ENCODE measurements at regions of chr7 and their contacts with region 1.

Region 1: DNA sequence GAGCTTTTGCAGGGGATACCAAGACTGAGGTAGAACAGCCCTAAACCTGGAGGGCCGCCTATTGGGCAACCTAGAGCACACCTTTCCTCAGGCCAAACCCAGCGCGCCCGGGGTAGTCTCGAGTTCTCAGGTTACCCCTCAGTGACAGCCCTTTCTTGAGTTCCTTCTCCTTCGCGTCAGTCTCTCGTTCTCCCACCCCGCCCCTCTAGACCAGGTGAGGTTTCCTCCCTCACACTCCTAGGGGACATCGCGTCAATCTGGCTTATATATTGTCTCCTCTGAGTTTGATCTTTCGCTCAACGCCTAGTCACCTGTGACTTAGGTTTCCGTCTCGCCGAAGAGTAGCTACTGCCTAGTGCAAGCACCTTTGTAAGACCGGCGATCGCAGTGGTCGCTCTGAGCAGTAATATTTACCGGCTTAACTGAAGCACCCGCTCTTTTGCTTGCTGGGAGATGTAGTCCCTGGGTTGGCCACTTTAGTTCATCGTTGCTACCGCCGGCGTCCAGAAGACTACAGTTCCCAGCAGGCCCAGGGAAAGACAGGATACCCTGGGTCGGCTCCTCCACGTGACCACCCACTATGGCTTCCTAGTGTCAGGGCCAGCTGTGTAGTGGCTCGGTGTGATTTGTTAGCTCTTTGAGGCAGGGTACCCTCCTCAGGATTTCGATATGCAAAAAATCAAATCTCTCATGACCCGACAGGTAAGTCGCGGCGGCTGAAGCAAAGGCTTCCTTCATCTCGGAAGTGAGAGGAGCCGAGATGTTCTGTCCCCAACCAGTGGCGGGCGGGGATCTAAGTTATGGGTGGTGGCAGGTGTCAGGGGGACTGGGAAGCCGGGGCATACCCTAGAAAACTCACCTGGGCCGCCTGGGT is at the start of gene VPS50:
- DNase-seq: peak; percentile 96
- ATAC-seq: peak; percentile 96
- H3K4me3 ChIP-seq: peak within 1 kb of the TSS; percentile 86
- H3K27ac ChIP-seq: peak within 1 kb of the TSS; percentile 78
- H3K4me1 ChIP-seq: peaks cover 22% of the 10 kb centered on the region
- H3K27me3 ChIP-seq: no peaks in the 10 kb centered on the region
- CTCF ChIP-seq: peak; percentile 34; the same call in 1 of the 2 replicates
- total RNA-seq, gene VPS50: 10.5 and 16.7 TPM in 2 replicates

Region 2: DNA sequence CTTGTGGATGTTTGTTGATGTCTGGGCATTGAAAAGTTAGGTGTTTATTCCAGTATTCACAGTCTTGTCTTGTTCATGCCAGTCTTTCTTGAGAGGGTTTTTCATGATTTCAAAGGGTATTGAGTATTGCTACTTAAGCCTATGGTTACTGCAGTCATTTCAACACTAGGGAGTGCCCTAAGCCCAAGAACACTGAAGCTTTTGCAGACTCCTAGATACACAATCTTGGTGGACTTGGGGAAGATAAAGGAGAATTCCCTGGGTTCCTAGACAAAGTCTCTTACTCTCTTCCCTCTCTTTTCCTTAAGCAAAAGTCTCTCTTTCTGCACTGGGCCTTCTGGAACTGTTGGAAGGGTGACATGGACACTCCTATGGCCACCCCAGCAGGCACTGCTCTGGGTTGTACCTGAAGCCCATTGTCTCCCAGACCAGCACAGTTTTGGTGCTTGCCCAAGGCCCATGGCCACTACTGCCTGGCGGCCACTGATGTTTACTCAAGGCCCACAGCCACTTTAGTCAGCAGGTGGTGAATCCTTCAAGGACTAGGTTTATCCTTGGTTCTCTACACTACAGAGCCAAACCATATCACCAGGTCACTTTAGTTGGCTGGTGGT is 139.2 kb before region 1 on chr7:
- CTCF ChIA-PET with region 1: no interaction called
- POLR2A ChIA-PET with region 1: no interaction called
- intact Hi-C with region 1: loop called (anchors 1 kb)
- DNase-seq: peak; percentile 46
- ATAC-seq: peak; percentile 81
- H3K4me3 ChIP-seq: no peak overlapping the region
- H3K27ac ChIP-seq: no peak overlapping the region
- H3K4me1 ChIP-seq: no peaks in the 10 kb centered on the region
- H3K27me3 ChIP-seq: no peaks in the 10 kb centered on the region
- CTCF ChIP-seq: peak; percentile 64

Region 3: GRCh38 chr7:93117852-93118530 is 114.0 kb before region 1 on chr7 and contains the start of gene SAMD9:
- CTCF ChIA-PET with region 1: no interaction called
- POLR2A ChIA-PET with region 1: no interaction called
- intact Hi-C with region 1: loop called (anchors 1 kb)
- DNase-seq: peak; percentile 83
- ATAC-seq: peak; percentile 75
- H3K4me3 ChIP-seq: peak within 1 kb of the TSS; percentile 72
- H3K27ac ChIP-seq: peak within 1 kb of the TSS; percentile 92
- H3K4me1 ChIP-seq: peaks cover 34% of the 10 kb centered on the region
- H3K27me3 ChIP-seq: no peaks in the 10 kb centered on the region
- CTCF ChIP-seq: no peak
- total RNA-seq, gene SAMD9: 3.0 and 3.3 TPM in 2 replicates

Region 4: GRCh38 chr7:93178212-93178611 is 53.8 kb before region 1 on chr7:
- CTCF ChIA-PET with region 1: interaction called, 6 read pairs
- POLR2A ChIA-PET with region 1: no interaction called
- intact Hi-C with region 1: loop called (anchors 1 kb)
- DNase-seq: peak; percentile 50
- ATAC-seq: peak; percentile 87
- H3K4me3 ChIP-seq: no peak overlapping the region
- H3K27ac ChIP-seq: no peak overlapping the region
- H3K4me1 ChIP-seq: no peaks in the 10 kb centered on the region
- H3K27me3 ChIP-seq: no peaks in the 10 kb centered on the region
- CTCF ChIP-seq: peak; percentile 65

Region 5: GRCh38 chr7:93203487-93203886 is 28.5 kb before region 1 on chr7:
- CTCF ChIA-PET with region 1: no interaction called
- POLR2A ChIA-PET with region 1: no interaction called
- intact Hi-C with region 1: loop called (anchors 2 kb)
- DNase-seq: peak; percentile 41
- ATAC-seq: peak; percentile 87
- H3K4me3 ChIP-seq: no peak overlapping the region
- H3K27ac ChIP-seq: peak overlapping the region; percentile 8; the same call in 1 of the 2 replicates
- H3K4me1 ChIP-seq: peaks cover 18% of the 10 kb centered on the region
- H3K27me3 ChIP-seq: no peaks in the 10 kb centered on the region
- CTCF ChIP-seq: no peak

Region 6: DNA sequence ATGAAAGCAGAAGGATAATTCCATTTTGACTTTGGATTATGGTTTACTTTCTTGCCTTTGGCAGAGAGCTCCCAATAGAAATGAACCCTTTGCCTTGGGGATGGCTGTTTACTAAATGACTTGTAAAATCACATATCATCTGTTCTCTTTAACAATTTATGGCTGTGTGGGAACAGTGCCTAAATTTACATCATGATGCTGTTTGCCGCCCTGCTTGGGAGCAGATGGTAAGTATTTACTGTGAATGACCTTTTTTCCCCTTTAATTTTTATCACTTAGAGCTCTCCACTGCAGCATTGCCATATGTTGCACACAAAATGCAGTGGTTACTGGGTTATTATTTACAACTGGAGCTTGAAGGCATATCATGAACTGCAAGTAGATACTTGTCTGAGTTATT is 19.2 kb before region 1 on chr7:
- CTCF ChIA-PET with region 1: no interaction called
- POLR2A ChIA-PET with region 1: no interaction called
- intact Hi-C with region 1: loop called (anchors 1 kb)
- DNase-seq: no peak
- ATAC-seq: peak; percentile 39
- H3K4me3 ChIP-seq: no peak overlapping the region
- H3K27ac ChIP-seq: no peak overlapping the region
- H3K4me1 ChIP-seq: no peaks in the 10 kb centered on the region
- H3K27me3 ChIP-seq: peaks cover 16% of the 10 kb centered on the region; the same call in 1 of the 2 replicates
- CTCF ChIP-seq: no peak

Measured in PC-3 (cell line).